T-cell (primary cell): ENCODE measurements at regions of chr6 and their contacts with region 1.

Region 1: GRCh38 chr6:90274451-90275030 is 22.1 kb downstream of the BACH2 start:
- DNase-seq: peak; percentile 54 to 99 (median 93)
- ATAC-seq: peak; percentile 87 to 99 (median 98)
- H3K4me3 ChIP-seq: peak overlapping the region; percentile 20 to 47
- H3K4me3 Mint-ChIP-seq: peak overlapping the region; percentile 63 to 74 (median 71)
- H3K27ac ChIP-seq: peak overlapping the region; percentile 98
- H3K27ac Mint-ChIP-seq: peak overlapping the region; percentile 95 to 98
- H3K4me1 ChIP-seq: peaks cover 44 to 72% of the 10 kb centered on the region in 2 experiments
- H3K4me1 Mint-ChIP-seq: peaks cover 90 to 93% (median 91%) of the 10 kb centered on the region in 3 donors
- H3K27me3 ChIP-seq: no peaks in the 10 kb centered on the region
- H3K27me3 Mint-ChIP-seq: no peaks in the 10 kb centered on the region

Region 2: DNA sequence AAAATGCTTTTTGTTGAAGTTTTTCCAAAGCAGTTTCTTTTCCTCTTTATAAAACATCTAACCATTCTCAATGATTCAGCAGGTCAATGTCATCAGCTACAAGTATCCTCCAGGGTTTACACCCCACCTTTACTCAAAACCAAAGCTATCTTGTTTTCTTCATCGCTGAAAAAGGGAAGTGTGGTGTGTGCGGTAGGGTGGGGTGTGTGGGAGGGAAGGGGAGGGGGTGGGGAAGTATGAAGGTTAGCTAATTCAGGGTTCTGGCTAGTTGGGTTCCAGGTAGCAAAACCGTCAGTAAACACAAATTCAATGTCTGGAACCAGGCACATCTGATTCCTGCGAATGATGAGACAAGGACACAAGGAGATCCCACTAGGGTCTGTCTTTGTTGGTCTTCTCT is 190.7 kb before region 1 on chr6:
- CTCF ChIA-PET with region 1: interaction called, 3 to 10 read pairs
- POLR2A ChIA-PET with region 1: interaction called in 1 of 2 experiments, 3 read pairs
- DNase-seq: peak in 31 of 35 experiments; percentile 16 to 64 (median 37)
- ATAC-seq: peak; percentile 16 to 70 (median 64)
- H3K4me3 ChIP-seq: peak overlapping the region in 1 of 2 donors; percentile 32
- H3K4me3 Mint-ChIP-seq: peak overlapping the region in 2 of 3 donors; percentile 37 to 65
- H3K27ac ChIP-seq: peak overlapping the region; percentile 5
- H3K27ac Mint-ChIP-seq: peak overlapping the region; percentile 77 to 80
- H3K4me1 ChIP-seq: peaks cover 18 to 57% of the 10 kb centered on the region in 2 experiments
- H3K4me1 Mint-ChIP-seq: peaks cover 84 to 86% (median 84%) of the 10 kb centered on the region in 3 donors
- H3K27me3 ChIP-seq: no peaks in the 10 kb centered on the region
- H3K27me3 Mint-ChIP-seq: no peaks in the 10 kb centered on the region

Region 3: GRCh38 chr6:90219209-90219985 is 55.1 kb before region 1 on chr6:
- CTCF ChIA-PET with region 1: interaction called in 1 of 2 experiments, 16 read pairs
- POLR2A ChIA-PET with region 1: interaction called, 5 read pairs
- DNase-seq: peak in 27 of 35 experiments; percentile 16 to 67 (median 37)
- ATAC-seq: peak in 1 of 4 experiments; percentile 24
- H3K4me3 ChIP-seq: peak overlapping the region in 1 of 2 donors; percentile 66
- H3K4me3 Mint-ChIP-seq: no peak overlapping the region
- H3K27ac ChIP-seq: peak overlapping the region; percentile 83
- H3K27ac Mint-ChIP-seq: no peak overlapping the region
- H3K4me1 ChIP-seq: peaks cover 43 to 71% of the 10 kb centered on the region in 2 experiments
- H3K4me1 Mint-ChIP-seq: peaks cover 6 to 23% (median 18%) of the 10 kb centered on the region in 3 donors
- H3K27me3 ChIP-seq: no peaks in the 10 kb centered on the region
- H3K27me3 Mint-ChIP-seq: no peaks in the 10 kb centered on the region

Region 4: DNA sequence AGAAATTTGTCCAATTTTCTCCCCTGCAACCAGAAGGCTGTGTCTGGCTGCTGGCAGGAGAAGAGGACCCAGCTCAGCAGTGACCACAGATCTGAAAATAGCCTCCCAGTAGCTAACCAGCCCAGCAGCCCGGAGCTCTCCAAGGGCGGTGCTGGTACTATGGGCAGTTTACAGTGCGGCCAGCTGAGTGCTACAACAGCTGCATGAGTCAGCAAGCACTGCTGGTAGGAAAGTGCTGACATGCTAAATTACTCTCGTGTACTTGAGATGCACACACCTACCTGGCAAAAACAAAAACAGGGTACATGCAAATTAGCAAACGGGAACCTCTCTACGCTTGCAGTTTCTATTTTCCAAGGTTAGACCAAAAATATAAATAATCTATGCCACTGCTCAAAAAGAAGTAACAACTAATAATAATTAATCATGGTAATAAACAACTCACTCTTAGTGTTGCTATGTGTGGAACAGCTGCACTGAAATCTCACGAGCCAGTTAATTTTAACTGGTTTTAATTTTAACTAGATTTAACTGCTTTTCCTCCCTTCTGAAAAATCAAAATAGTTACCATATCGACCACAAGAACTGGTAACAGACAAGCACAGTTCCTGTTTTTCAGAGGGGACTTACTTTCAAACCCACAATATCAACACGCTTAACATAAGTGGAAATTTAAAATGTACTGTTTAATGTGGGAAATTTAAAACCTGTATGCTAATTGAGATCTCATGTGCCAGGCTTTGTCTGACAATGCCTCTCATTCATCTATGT is 11.3 kb after region 1 on chr6:
- CTCF ChIA-PET with region 1: interaction called, 6 to 16 read pairs
- POLR2A ChIA-PET with region 1: interaction called, 8 to 10 read pairs
- DNase-seq: peak in 23 of 35 experiments; percentile 21 to 68 (median 34)
- ATAC-seq: peak; percentile 61 to 67 (median 62)
- H3K4me3 ChIP-seq: peak overlapping the region; percentile 39 to 67
- H3K4me3 Mint-ChIP-seq: peak overlapping the region; percentile 78 to 90 (median 84)
- H3K27ac ChIP-seq: peak overlapping the region; percentile 70
- H3K27ac Mint-ChIP-seq: peak overlapping the region; percentile 94 to 98
- H3K4me1 ChIP-seq: peaks cover 36 to 73% of the 10 kb centered on the region in 2 experiments
- H3K4me1 Mint-ChIP-seq: peaks cover 91 to 98% (median 92%) of the 10 kb centered on the region in 3 donors
- H3K27me3 ChIP-seq: no peaks in the 10 kb centered on the region
- H3K27me3 Mint-ChIP-seq: no peaks in the 10 kb centered on the region

Region 5: DNA sequence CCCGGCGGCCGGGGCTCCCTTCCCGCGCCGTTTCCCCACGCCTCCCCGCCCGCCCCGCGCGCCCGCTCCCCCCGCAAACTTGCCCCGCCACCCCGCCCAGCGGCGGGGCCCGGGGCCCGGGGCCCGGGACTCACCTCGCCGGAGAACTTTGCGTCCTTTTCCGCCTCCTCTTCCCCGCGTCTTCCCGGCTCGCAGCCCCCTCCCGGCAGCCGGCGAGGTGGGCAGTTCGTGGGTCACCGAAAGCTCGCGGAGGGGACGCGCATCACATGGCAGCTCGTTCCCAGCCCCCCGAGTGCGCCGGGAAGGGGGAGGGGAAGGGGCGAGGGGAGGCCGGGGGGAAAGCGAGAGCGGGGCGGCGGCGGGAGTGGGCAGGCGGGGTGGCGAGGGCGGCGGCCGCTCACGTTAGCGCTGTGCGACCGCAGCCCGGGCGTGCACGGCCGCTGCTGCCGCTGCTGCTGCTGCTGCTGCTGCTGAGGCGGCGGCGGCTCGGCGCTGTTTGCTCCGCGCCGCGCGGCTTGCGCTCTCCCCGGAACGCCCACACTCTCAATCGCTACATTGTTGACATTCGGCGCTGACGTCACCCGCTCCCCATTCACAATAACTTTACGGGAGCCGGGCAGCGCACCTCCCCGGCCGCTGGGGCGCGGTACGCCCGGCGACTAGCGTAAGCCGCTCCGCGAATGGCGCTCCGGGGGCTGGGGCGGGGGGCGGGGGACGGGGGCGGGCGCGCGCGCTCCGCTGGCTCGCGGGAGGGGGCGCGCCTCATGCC is 22.0 kb after region 1 on chr6 and contains the start of gene BACH2:
- CTCF ChIA-PET with region 1: interaction called, 3 to 11 read pairs
- POLR2A ChIA-PET with region 1: interaction called, 13 to 43 read pairs
- DNase-seq: peak; percentile 83 to 98 (median 95)
- ATAC-seq: peak; percentile 69 to 81 (median 72)
- H3K4me3 ChIP-seq: peak within 1 kb of the TSS; percentile 79 to 93
- H3K4me3 Mint-ChIP-seq: peak within 1 kb of the TSS; percentile 84 to 92 (median 92)
- H3K27ac ChIP-seq: peak within 1 kb of the TSS; percentile 81
- H3K27ac Mint-ChIP-seq: peak within 1 kb of the TSS; percentile 88 to 94
- H3K4me1 ChIP-seq: peaks cover 18 to 37% of the 10 kb centered on the region in 2 experiments
- H3K4me1 Mint-ChIP-seq: peaks cover 30 to 43% (median 34%) of the 10 kb centered on the region in 3 donors
- H3K27me3 ChIP-seq: peaks cover 0 to 8% of the 10 kb centered on the region in 2 experiments
- H3K27me3 Mint-ChIP-seq: peaks cover 0 to 4% of the 10 kb centered on the region in 2 donors
- total RNA-seq, gene BACH2: 81.9 to 196 (median 96.7) TPM

Region 6: GRCh38 chr6:90350689-90351554 is 76.4 kb after region 1 on chr6:
- CTCF ChIA-PET with region 1: no interaction called
- POLR2A ChIA-PET with region 1: no interaction called
- DNase-seq: peak; percentile 10 to 80 (median 48)
- ATAC-seq: peak; percentile 91 to 98 (median 95)
- H3K4me3 ChIP-seq: no peak overlapping the region
- H3K4me3 Mint-ChIP-seq: peak overlapping the region in 2 of 3 donors; percentile 14 to 27
- H3K27ac ChIP-seq: peak overlapping the region; percentile 57
- H3K27ac Mint-ChIP-seq: peak overlapping the region; percentile 74 to 88
- H3K4me1 ChIP-seq: peaks cover 5 to 10% of the 10 kb centered on the region in 2 experiments
- H3K4me1 Mint-ChIP-seq: peaks cover 23 to 29% (median 26%) of the 10 kb centered on the region in 3 donors
- H3K27me3 ChIP-seq: peaks cover 0 to 1% of the 10 kb centered on the region in 2 experiments
- H3K27me3 Mint-ChIP-seq: peaks cover 2 to 4% of the 10 kb centered on the region in 2 donors

Region 7: GRCh38 chr6:90446164-90446563 is 171.6 kb after region 1 on chr6:
- CTCF ChIA-PET with region 1: no interaction called
- POLR2A ChIA-PET with region 1: no interaction called
- DNase-seq: no peak
- ATAC-seq: no peak
- H3K4me3 ChIP-seq: no peak overlapping the region
- H3K4me3 Mint-ChIP-seq: no peak overlapping the region
- H3K27ac ChIP-seq: no peak overlapping the region
- H3K27ac Mint-ChIP-seq: no peak overlapping the region
- H3K4me1 ChIP-seq: no peaks in the 10 kb centered on the region
- H3K4me1 Mint-ChIP-seq: peaks cover 12 to 18% (median 12%) of the 10 kb centered on the region in 3 donors
- H3K27me3 ChIP-seq: no peaks in the 10 kb centered on the region
- H3K27me3 Mint-ChIP-seq: no peaks in the 10 kb centered on the region

Region 8: GRCh38 chr6:91730710-91731109 is 1456.2 kb after region 1 on chr6:
- CTCF ChIA-PET with region 1: no interaction called
- POLR2A ChIA-PET with region 1: no interaction called
- DNase-seq: no peak
- ATAC-seq: no peak
- H3K4me3 ChIP-seq: no peak overlapping the region
- H3K4me3 Mint-ChIP-seq: no peak overlapping the region
- H3K27ac ChIP-seq: no peak overlapping the region
- H3K27ac Mint-ChIP-seq: no peak overlapping the region
- H3K4me1 ChIP-seq: no peaks in the 10 kb centered on the region
- H3K4me1 Mint-ChIP-seq: no peaks in the 10 kb centered on the region
- H3K27me3 ChIP-seq: no peaks in the 10 kb centered on the region
- H3K27me3 Mint-ChIP-seq: no peaks in the 10 kb centered on the region